PC-3 (cell line): ENCODE measurements at regions of chrX and their contacts with region 1.

Region 1: DNA sequence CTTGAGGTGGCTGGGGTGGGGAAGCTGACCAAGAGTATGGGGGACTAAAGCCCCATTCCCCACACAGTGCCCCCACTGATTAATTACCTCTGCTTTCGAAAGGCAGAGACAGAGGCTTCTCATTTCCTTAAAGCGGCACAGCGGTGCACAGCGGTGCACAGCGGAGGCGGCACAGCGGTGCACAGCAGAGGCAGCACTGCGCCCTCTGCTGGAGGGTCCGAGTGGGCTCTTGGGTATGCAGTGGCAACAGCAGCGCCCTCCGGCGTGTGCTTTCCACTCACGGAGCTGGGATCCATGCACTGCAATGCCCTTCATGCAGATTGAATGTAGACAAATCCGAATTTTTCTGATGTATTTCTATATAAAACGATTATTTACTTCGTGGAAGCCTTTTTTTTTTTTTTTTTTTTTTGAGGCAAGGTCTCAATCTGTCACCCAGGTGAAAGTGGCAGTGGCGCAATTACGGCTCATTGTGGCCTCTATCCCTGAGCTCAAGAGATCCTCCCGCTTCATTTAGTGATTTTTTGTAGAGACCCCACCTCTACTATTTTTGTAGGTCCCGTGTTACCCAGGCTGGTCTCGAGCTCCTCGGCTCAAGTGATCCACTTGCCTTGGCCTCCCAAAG is 19.7 kb upstream of the PRPS2 start:
- DNase-seq: peak; percentile 78
- ATAC-seq: peak; percentile 99
- H3K4me3 ChIP-seq: peak overlapping the region; percentile 59; the same call in 1 of the 2 replicates
- H3K27ac ChIP-seq: no peak overlapping the region
- H3K4me1 ChIP-seq: no peaks in the 10 kb centered on the region
- H3K27me3 ChIP-seq: 0 out of 2 replicates have a peak, but pooled peaks cover 6% of the 10 kb centered on the region
- CTCF ChIP-seq: peak; percentile 95

Region 2: GRCh38 chrX:12419591-12419990 is 352.0 kb before region 1 on chrX:
- CTCF ChIA-PET with region 1: interaction called, 12 read pairs
- POLR2A ChIA-PET with region 1: no interaction called
- intact Hi-C with region 1: no loop called
- DNase-seq: no peak
- ATAC-seq: no peak
- H3K4me3 ChIP-seq: no peak overlapping the region
- H3K27ac ChIP-seq: no peak overlapping the region
- H3K4me1 ChIP-seq: no peaks in the 10 kb centered on the region
- H3K27me3 ChIP-seq: no peaks in the 10 kb centered on the region
- CTCF ChIP-seq: no peak

Region 3: GRCh38 chrX:12563121-12563520 is 208.4 kb before region 1 on chrX:
- CTCF ChIA-PET with region 1: no interaction called
- POLR2A ChIA-PET with region 1: no interaction called
- intact Hi-C with region 1: no loop called
- DNase-seq: peak; percentile 65
- ATAC-seq: peak; percentile 49
- H3K4me3 ChIP-seq: no peak overlapping the region
- H3K27ac ChIP-seq: peak overlapping the region; percentile 79
- H3K4me1 ChIP-seq: peaks cover 27% of the 10 kb centered on the region
- H3K27me3 ChIP-seq: no peaks in the 10 kb centered on the region
- CTCF ChIP-seq: no peak

Region 4: GRCh38 chrX:12595720-12596119 is 175.8 kb before region 1 on chrX:
- CTCF ChIA-PET with region 1: interaction called, 11 read pairs
- POLR2A ChIA-PET with region 1: no interaction called
- intact Hi-C with region 1: no loop called
- DNase-seq: no peak
- ATAC-seq: no peak
- H3K4me3 ChIP-seq: no peak overlapping the region
- H3K27ac ChIP-seq: no peak overlapping the region
- H3K4me1 ChIP-seq: no peaks in the 10 kb centered on the region
- H3K27me3 ChIP-seq: no peaks in the 10 kb centered on the region
- CTCF ChIP-seq: no peak

Region 5: DNA sequence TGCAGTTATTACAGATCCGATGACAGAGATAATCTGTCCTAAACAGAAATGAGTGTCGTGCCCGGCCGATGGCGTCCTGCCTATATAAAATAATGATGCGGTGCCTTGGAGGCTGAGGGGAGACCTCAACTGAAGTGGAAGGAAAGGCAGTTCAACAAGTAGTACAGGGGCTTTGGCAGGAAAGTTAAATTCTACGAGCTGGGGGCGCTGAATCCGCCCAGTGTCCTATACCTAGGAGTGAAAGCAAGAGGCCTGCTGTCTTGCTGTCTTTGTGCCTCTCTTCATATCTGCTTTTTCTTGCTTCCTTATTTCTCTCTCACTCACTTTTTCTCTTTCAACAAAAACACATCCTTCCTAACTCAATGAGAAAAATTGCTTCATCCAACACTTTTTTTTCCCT is 62.5 kb before region 1 on chrX:
- CTCF ChIA-PET with region 1: no interaction called
- POLR2A ChIA-PET with region 1: no interaction called
- intact Hi-C with region 1: loop called (anchors 1 kb)
- DNase-seq: peak; percentile 74
- ATAC-seq: peak; percentile 74
- H3K4me3 ChIP-seq: no peak overlapping the region
- H3K27ac ChIP-seq: no peak overlapping the region
- H3K4me1 ChIP-seq: no peaks in the 10 kb centered on the region
- H3K27me3 ChIP-seq: no peaks in the 10 kb centered on the region
- CTCF ChIP-seq: peak; percentile 69

Region 6: DNA sequence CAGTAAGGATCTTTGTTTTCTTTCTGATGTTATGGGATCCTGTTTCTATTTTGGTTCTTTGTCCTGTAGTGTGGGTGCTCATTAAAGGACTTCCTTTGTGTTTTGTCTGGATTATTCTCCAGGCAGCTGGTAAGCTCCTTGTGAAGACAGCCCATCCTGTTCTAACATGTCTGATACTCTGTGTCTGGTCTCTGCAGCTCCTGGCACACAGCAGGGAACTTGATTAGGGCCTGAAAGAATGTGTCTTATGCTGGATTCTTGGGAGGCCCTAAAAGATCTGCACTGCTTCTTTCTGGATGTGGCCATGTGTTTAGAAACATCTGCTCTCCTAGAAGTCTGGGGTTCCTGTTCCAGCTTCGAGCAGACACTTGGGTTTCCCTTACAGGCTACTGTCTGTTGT is 586.4 kb after region 1 on chrX:
- CTCF ChIA-PET with region 1: interaction called, 10 read pairs
- POLR2A ChIA-PET with region 1: no interaction called
- intact Hi-C with region 1: no loop called
- DNase-seq: no peak
- ATAC-seq: no peak
- H3K4me3 ChIP-seq: no peak overlapping the region
- H3K27ac ChIP-seq: no peak overlapping the region
- H3K4me1 ChIP-seq: no peaks in the 10 kb centered on the region
- H3K27me3 ChIP-seq: no peaks in the 10 kb centered on the region
- CTCF ChIP-seq: no peak